A549 (cell line): ENCODE measurements at regions of chr13 and their contacts with region 1.

Region 1: GRCh38 chr13:48233046-48233907 is at the start of gene ITM2B:
- DNase-seq: peak; percentile 32 to 64
- ATAC-seq: peak; percentile 88 to 92
- H3K4me3 ChIP-seq: peak within 1 kb of the TSS; percentile 87
- H3K27ac ChIP-seq: peak within 1 kb of the TSS; percentile 89 to 95
- H3K4me1 ChIP-seq: peaks cover 51% of the 10 kb centered on the region
- CTCF ChIP-seq: peak; percentile 27; the same call in 2 of the 3 replicates
- EP300 ChIP-seq: no peak
- POLR2A ChIP-seq: peak; percentile 23; the same call in 1 of the 2 replicates
- RAD21 ChIP-seq: no peak; a peak in 1 of 5 replicates
- polyA plus RNA-seq, gene ITM2B: 226 and 234 TPM in 2 replicates

Region 2: GRCh38 chr13:48291730-48292129 is 58.5 kb after region 1 on chr13:
- CTCF ChIA-PET with region 1: no interaction called
- POLR2A ChIA-PET with region 1: no interaction called
- DNase-seq: no peak
- ATAC-seq: no peak
- H3K4me3 ChIP-seq: no peak overlapping the region
- H3K27ac ChIP-seq: no peak overlapping the region
- H3K4me1 ChIP-seq: no peaks in the 10 kb centered on the region
- CTCF ChIP-seq: no peak
- EP300 ChIP-seq: no peak
- POLR2A ChIP-seq: no peak
- RAD21 ChIP-seq: no peak

Region 3: GRCh38 chr13:48302871-48303358 is 69.6 kb after region 1 on chr13:
- CTCF ChIA-PET with region 1: no interaction called
- POLR2A ChIA-PET with region 1: interaction called, 10 read pairs
- DNase-seq: no peak
- ATAC-seq: peak in 1 of 2 experiments; percentile 45; a peak in 4 of 6 replicates
- H3K4me3 ChIP-seq: peak overlapping the region; percentile 83
- H3K27ac ChIP-seq: peak overlapping the region; percentile 87 to 96
- H3K4me1 ChIP-seq: peaks cover 12% of the 10 kb centered on the region; the same call in 2 of the 3 replicates
- CTCF ChIP-seq: no peak
- EP300 ChIP-seq: no peak
- POLR2A ChIP-seq: no peak
- RAD21 ChIP-seq: no peak